Caco-2 (cell line): ENCODE measurements at regions of chr3 and their contacts with region 1.

Region 1: DNA sequence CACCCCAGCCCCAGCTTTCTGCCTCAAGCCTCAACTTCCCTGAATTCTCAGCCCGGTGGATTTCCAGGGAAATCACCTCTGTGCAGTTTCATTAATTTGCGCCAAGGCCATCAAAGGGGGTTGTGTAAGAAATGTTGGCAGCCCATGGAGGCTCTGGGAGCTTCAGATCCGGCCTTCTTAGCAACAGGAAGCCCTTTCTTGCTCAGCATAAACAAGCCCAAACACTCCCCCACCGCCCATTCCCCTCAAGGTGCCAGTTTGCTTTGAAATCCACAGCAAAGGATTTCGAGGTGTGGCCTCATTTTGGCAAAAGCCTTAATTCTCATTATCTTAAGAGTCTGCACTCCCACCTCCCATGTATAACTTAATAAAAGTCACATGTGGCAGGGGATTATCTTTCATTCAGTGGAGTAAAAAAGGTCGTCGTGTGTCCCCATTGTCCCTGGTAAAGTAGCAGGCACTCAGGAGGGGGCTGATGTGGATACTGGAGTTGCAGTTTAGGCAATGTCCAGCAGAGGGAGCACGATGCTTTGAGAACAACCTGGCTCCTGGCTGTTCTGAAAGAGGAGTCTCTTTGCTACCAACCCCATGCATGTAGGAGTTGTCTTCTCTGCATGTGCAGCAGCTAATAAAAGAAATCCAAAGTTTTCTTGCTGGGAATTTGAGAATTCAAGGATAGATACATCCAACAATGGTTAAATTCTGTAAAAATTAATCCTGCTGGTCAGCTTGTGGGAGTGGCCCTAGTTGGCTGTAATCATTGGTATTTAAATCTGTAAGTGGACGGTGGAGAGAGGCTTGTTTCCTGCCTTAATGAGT is 39.5 kb downstream of the EBLN2 start:
- DNase-seq: peak; percentile 84 to 87
- H3K4me3 ChIP-seq: no peak overlapping the region
- H3K4me3 Mint-ChIP-seq: peak overlapping the region; percentile 29
- H3K27ac Mint-ChIP-seq: peak overlapping the region; percentile 80
- H3K4me1 ChIP-seq: peaks cover 11% of the 10 kb centered on the region
- H3K4me1 Mint-ChIP-seq: peaks cover 29% of the 10 kb centered on the region
- H3K27me3 ChIP-seq: no peaks in the 10 kb centered on the region
- H3K27me3 Mint-ChIP-seq: no peaks in the 10 kb centered on the region
- CTCF ChIP-seq: peak; percentile 86 to 88

Region 2: GRCh38 chr3:73148682-73149081 is 47.7 kb after region 1 on chr3:
- CTCF ChIA-PET with region 1: no interaction called
- POLR2A ChIA-PET with region 1: no interaction called
- intact Hi-C with region 1: loop called (anchors 1 kb)
- DNase-seq: peak; percentile 58 to 67
- H3K4me3 ChIP-seq: no peak overlapping the region
- H3K4me3 Mint-ChIP-seq: peak overlapping the region; percentile 14
- H3K27ac Mint-ChIP-seq: peak overlapping the region; percentile 63
- H3K4me1 ChIP-seq: peaks cover 35% of the 10 kb centered on the region
- H3K4me1 Mint-ChIP-seq: peaks cover 23% of the 10 kb centered on the region
- H3K27me3 ChIP-seq: no peaks in the 10 kb centered on the region
- H3K27me3 Mint-ChIP-seq: no peaks in the 10 kb centered on the region
- CTCF ChIP-seq: no peak

Region 3: DNA sequence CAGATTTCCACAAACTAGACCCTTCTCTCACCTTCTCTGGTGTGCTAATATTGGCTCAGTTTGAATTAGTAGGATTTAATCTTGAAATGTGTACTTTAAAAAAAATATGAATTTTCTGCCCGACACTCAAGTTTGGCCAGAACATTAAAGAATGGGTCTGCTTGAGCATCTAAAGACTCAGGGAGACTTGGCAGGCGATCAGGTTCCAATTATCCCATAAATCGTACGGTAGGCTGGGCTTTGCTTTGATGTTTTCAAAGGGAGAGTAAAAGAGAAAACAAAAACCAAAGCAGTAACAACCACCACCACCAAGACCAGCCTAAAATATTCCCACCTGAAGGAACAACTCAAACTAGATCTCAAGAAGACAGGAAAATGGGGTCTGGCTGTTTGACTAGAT is 191.3 kb after region 1 on chr3:
- CTCF ChIA-PET with region 1: no interaction called
- POLR2A ChIA-PET with region 1: no interaction called
- intact Hi-C with region 1: loop called (anchors 5 kb)
- DNase-seq: no peak
- H3K4me3 ChIP-seq: no peak overlapping the region
- H3K4me3 Mint-ChIP-seq: no peak overlapping the region
- H3K27ac Mint-ChIP-seq: no peak overlapping the region
- H3K4me1 ChIP-seq: no peaks in the 10 kb centered on the region
- H3K4me1 Mint-ChIP-seq: no peaks in the 10 kb centered on the region
- H3K27me3 ChIP-seq: no peaks in the 10 kb centered on the region
- H3K27me3 Mint-ChIP-seq: peaks cover 9% of the 10 kb centered on the region
- CTCF ChIP-seq: no peak

Region 4: GRCh38 chr3:73432023-73432705 is 331.2 kb after region 1 on chr3:
- CTCF ChIA-PET with region 1: no interaction called
- POLR2A ChIA-PET with region 1: no interaction called
- intact Hi-C with region 1: loop called (anchors 1 kb)
- DNase-seq: peak in 1 of 2 experiments; percentile 50
- H3K4me3 ChIP-seq: no peak overlapping the region
- H3K4me3 Mint-ChIP-seq: no peak overlapping the region
- H3K27ac Mint-ChIP-seq: no peak overlapping the region
- H3K4me1 ChIP-seq: no peaks in the 10 kb centered on the region
- H3K4me1 Mint-ChIP-seq: no peaks in the 10 kb centered on the region
- H3K27me3 ChIP-seq: no peaks in the 10 kb centered on the region
- H3K27me3 Mint-ChIP-seq: no peaks in the 10 kb centered on the region
- CTCF ChIP-seq: peak; percentile 49 to 69

Region 5: GRCh38 chr3:73502609-73503583 is 401.9 kb after region 1 on chr3:
- CTCF ChIA-PET with region 1: interaction called, 5 read pairs
- POLR2A ChIA-PET with region 1: no interaction called
- intact Hi-C with region 1: loop called (anchors 1 kb)
- DNase-seq: peak; percentile 71 to 72
- H3K4me3 ChIP-seq: no peak overlapping the region
- H3K4me3 Mint-ChIP-seq: no peak overlapping the region
- H3K27ac Mint-ChIP-seq: no peak overlapping the region
- H3K4me1 ChIP-seq: peaks cover 14% of the 10 kb centered on the region
- H3K4me1 Mint-ChIP-seq: no peaks in the 10 kb centered on the region
- H3K27me3 ChIP-seq: no peaks in the 10 kb centered on the region
- H3K27me3 Mint-ChIP-seq: no peaks in the 10 kb centered on the region
- CTCF ChIP-seq: peak; percentile 72 to 85